A673 (cell line): ENCODE measurements at regions of chr1 and their contacts with region 1.

Region 1: DNA sequence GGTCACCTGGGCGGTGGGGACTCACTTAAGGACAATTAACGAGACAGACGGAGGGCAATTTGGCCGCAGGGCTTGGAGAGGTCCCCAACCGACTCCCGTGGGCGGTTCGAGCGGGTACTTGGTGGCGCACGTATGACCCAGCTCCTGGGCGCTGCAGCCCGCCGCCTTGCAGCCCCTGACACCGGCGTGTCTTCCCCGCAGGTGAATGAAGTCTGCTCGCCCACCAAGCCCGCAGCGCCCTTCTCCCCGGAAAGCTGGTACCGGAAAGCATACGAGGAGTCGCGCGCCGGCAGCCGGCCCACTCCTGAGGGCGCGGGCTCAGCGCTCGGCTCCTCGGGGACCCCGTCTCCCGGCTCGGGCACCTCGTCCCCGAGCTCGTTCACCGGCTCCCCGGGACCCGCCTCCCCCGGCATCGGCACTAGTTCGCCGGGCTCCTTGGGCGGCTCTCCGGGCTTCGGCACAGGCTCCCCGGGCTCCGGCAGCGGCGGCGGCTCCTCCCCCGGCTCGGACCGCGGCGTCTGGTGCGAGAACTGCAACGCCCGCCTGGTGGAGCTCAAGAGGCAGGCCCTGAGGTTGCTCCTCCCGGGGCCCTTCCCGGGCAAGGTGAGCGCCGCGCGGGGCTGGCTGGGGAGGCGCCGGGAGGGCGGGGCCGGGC is 1.4 kb downstream of the KIF26B start:
- DNase-seq: peak; percentile 84
- H3K4me3 ChIP-seq: peak overlapping the region; percentile 42
- H3K27ac ChIP-seq: no peak overlapping the region
- H3K4me1 ChIP-seq: peaks cover 36% of the 10 kb centered on the region
- H3K27me3 ChIP-seq: peaks cover 94% of the 10 kb centered on the region
- CTCF ChIP-seq: peak; percentile 63

Region 2: DNA sequence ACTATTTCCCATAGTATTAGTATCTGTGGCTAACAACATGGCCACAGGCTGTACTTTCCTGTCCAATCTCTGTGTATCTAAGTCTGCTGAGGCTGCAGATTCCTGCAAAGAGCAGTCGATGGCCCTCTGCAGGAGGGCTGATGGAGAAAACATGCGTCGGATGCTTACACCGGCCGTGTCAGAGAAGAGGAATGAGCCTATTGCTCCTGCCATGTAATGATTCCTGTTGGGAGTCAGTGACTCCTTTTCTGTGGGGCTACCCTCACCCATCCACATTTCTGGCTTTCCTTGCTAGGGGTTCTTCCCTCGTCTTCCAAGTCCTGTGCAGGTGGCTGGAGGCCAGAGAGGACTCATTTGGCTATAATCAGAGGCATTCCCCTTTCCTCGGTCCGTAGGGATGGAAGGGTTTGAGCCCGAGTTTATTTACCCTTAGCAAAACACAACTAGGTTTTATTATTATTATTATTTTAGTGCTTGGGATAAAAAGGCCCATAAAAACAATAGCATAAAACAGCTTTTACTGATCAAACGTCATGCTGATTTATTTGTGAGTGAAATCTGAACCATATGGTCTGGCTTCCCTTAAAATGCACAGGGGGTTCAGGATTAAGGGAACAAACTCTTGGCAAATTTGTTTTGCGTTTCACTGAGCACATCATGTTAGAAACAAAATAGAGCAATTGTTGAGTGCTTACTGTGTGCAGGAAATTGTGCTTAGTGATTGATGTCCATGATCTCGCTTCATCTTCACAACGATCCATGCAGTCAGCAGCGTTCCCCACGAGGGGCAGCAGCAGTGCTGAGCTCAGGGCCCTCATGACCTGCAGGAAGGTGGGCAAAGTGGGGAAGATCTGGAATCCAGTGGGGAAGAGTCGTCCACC is 69.4 kb after region 1 on chr1:
- CTCF ChIA-PET with region 1: no interaction called
- POLR2A ChIA-PET with region 1: no interaction called
- intact Hi-C with region 1: no loop called
- DNase-seq: no peak
- H3K4me3 ChIP-seq: no peak overlapping the region
- H3K27ac ChIP-seq: no peak overlapping the region
- H3K4me1 ChIP-seq: no peaks in the 10 kb centered on the region
- H3K27me3 ChIP-seq: no peaks in the 10 kb centered on the region
- CTCF ChIP-seq: peak; percentile 15; the same call in 1 of the 2 replicates

Region 3: GRCh38 chr1:245516284-245516759 is 360.1 kb after region 1 on chr1:
- CTCF ChIA-PET with region 1: no interaction called
- POLR2A ChIA-PET with region 1: no interaction called
- intact Hi-C with region 1: loop called (anchors 5 kb)
- DNase-seq: peak; percentile 77
- H3K4me3 ChIP-seq: no peak overlapping the region
- H3K27ac ChIP-seq: no peak overlapping the region
- H3K4me1 ChIP-seq: no peaks in the 10 kb centered on the region
- H3K27me3 ChIP-seq: peaks cover 30% of the 10 kb centered on the region
- CTCF ChIP-seq: peak; percentile 73

Region 4: GRCh38 chr1:246002725-246003441 is 846.7 kb after region 1 on chr1:
- CTCF ChIA-PET with region 1: interaction called, 7 read pairs
- POLR2A ChIA-PET with region 1: no interaction called
- intact Hi-C with region 1: loop called (anchors 1 kb)
- DNase-seq: peak; percentile 85
- H3K4me3 ChIP-seq: no peak overlapping the region
- H3K27ac ChIP-seq: no peak overlapping the region
- H3K4me1 ChIP-seq: no peaks in the 10 kb centered on the region
- H3K27me3 ChIP-seq: no peaks in the 10 kb centered on the region
- CTCF ChIP-seq: peak; percentile 85

Region 5: GRCh38 chr1:246280551-246280950 is 1124.3 kb after region 1 on chr1:
- CTCF ChIA-PET with region 1: no interaction called
- POLR2A ChIA-PET with region 1: no interaction called
- intact Hi-C with region 1: loop called (anchors 10 kb)
- DNase-seq: peak; percentile 28
- H3K4me3 ChIP-seq: no peak overlapping the region
- H3K27ac ChIP-seq: no peak overlapping the region
- H3K4me1 ChIP-seq: no peaks in the 10 kb centered on the region
- H3K27me3 ChIP-seq: no peaks in the 10 kb centered on the region
- CTCF ChIP-seq: peak; percentile 40

Region 6: DNA sequence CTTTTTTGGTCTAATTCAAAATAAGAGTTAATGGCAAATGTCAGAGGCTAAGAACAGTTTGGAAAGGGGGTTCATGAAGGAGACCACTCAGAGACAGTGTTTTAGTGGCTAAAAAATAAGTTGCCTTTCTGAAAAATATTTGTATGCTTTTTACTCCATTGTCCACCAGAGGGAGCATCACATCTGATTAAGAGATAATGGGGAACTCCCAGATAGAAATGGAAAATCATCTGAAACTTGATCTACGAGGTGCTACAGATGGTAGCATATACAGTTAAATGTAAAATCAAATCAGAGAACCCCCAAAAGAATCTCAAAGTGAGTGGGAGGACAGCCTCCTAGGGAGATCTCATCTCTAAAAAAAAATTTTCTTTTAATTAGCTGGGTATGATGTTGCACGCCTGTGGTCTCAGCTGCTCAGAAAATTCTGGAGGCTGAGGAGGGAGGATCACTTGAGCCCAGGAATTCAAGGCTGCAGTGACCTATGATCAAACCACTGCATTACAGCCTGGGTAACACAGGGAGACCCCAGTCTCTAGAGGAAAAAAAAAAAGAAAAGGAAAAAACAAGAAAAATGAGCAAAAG is 1341.2 kb after region 1 on chr1:
- CTCF ChIA-PET with region 1: no interaction called
- POLR2A ChIA-PET with region 1: no interaction called
- intact Hi-C with region 1: loop called (anchors 1 kb)
- DNase-seq: peak; percentile 84
- H3K4me3 ChIP-seq: no peak overlapping the region
- H3K27ac ChIP-seq: no peak overlapping the region
- H3K4me1 ChIP-seq: no peaks in the 10 kb centered on the region
- H3K27me3 ChIP-seq: no peaks in the 10 kb centered on the region
- CTCF ChIP-seq: peak; percentile 85